Activated CD4-positive, alpha-beta T cell treated with anti-CD3 and anti-CD28 coated beads, Interleukin-2, amount 10 ng/mL, durations not matched to agents 24 days and 14 days (primary cell): ENCODE measurements at regions of chr19 and their contacts with region 1.

Region 1: DNA sequence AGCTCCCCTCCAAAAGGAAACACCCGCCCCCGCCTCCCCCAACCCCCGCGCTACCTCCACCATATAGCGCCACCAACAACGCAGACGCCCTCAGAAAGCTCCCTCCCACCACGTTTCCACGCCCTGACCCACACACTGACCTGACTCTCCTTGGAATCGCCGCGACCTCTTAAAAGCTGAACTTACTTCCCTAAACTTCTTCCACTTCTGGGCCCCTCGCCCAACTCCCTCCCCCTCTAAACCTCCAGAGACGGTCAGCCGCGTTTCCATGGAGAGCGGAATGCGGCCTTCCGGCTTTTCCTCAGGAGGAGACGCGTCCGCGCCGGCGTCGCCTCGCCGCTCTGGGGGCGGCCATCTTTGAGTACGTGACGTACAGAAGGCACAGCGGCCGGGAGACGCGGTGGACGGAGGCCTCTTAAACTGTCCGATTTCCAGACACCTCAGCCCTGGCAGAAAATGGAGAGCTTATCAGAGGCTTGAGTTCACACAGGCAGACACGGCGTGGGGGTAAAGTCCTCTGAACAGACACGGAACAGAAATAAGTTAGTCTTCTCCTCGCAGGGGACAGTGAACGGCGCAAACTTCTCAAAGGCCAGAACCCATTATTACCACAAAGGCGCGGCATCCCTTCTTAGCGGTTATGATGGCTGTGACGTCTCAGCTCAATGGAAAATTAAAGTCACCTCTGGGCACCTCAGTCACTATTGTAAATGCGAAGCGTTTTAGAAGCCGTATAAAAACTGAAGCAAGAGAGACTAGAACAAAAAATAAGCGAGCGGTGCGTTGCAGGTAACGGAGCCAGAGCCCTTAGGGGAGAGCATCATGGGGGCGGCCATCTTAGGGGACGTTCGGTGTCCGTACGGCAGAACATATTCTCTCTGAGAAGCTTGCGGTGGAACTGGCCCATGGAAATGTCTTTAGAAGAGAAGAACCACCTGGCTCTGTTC is at the start of gene ZNF432:
- DNase-seq: peak; percentile 94
- H3K4me3 Mint-ChIP-seq: peak within 1 kb of the TSS; percentile 98
- H3K27ac Mint-ChIP-seq: peak within 1 kb of the TSS; percentile 99
- H3K4me1 Mint-ChIP-seq: peaks cover 21% of the 10 kb centered on the region
- H3K27me3 Mint-ChIP-seq: no peaks in the 10 kb centered on the region
- total RNA-seq, gene ZNF432: 10.8 and 13.8 TPM in 2 replicates

Region 2: GRCh38 chr19:51926784-51927742 is 121.8 kb before region 1 on chr19 and contains the start of gene ZNF613:
- intact Hi-C with region 1: loop called (anchors 1 kb)
- DNase-seq: peak; percentile 93
- H3K4me3 Mint-ChIP-seq: peak within 1 kb of the TSS; percentile 100
- H3K27ac Mint-ChIP-seq: peak within 1 kb of the TSS; percentile 97
- H3K4me1 Mint-ChIP-seq: peaks cover 19% of the 10 kb centered on the region
- H3K27me3 Mint-ChIP-seq: no peaks in the 10 kb centered on the region
- total RNA-seq, gene ZNF613: 3.5 and 5.0 TPM in 2 replicates

Region 3: GRCh38 chr19:52007806-52008557 is 40.8 kb before region 1 on chr19 and contains the start of gene ZNF615:
- intact Hi-C with region 1: loop called (anchors 1 kb)
- DNase-seq: peak; percentile 96
- H3K4me3 Mint-ChIP-seq: peak within 1 kb of the TSS; percentile 91
- H3K27ac Mint-ChIP-seq: peak within 1 kb of the TSS; percentile 98
- H3K4me1 Mint-ChIP-seq: peaks cover 14% of the 10 kb centered on the region
- H3K27me3 Mint-ChIP-seq: no peaks in the 10 kb centered on the region
- total RNA-seq, gene ZNF615: 5.9 and 6.9 TPM in 2 replicates

Region 4: GRCh38 chr19:52139252-52140031 is 90.6 kb after region 1 on chr19 and contains the start of gene ZNF616:
- intact Hi-C with region 1: loop called (anchors 1 kb)
- DNase-seq: peak; percentile 99
- H3K4me3 Mint-ChIP-seq: peak within 1 kb of the TSS; percentile 98
- H3K27ac Mint-ChIP-seq: peak within 1 kb of the TSS; percentile 90
- H3K4me1 Mint-ChIP-seq: peaks cover 17% of the 10 kb centered on the region
- H3K27me3 Mint-ChIP-seq: no peaks in the 10 kb centered on the region
- total RNA-seq, gene ZNF616: 6.1 and 7.1 TPM in 2 replicates